CD8-positive, alpha-beta memory T cell (primary cell): ENCODE measurements at regions of chr6 and their contacts with region 1.

Region 1: DNA sequence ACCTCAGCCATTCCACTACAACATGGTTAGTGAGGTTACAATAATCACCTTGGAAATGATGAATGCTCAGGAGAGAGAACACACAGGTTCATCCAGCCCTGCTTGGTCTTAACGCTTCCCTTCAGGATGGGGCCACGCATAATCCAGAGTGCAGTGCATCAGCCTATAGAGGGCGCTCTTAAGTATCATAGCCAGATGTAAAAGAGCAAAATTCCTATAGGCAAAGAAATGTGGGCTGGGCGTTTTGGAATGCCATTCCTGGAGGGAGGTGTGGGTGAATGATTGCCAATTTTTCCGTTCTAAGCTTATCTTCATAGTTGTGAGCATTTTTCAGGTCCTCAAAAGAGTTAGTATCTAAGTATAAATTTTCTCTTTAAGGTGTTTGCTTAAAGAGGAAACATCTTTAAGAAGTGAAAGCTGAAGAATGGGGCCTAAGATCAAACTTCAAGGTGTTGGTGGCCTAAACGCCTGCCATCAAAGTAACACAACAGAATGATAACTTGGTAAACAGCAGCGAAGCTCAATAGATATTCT is 1.8 kb downstream of the RIPOR2 start:
- DNase-seq: peak in 4 of 5 donors; percentile 39 to 75 (median 61)
- H3K4me3 ChIP-seq: peak overlapping the region; percentile 72
- H3K4me3 Mint-ChIP-seq: peak overlapping the region; percentile 85 to 99 (median 99)
- H3K27ac ChIP-seq: peak overlapping the region; percentile 64
- H3K27ac Mint-ChIP-seq: peak overlapping the region; percentile 84 to 97 (median 90)
- H3K4me1 ChIP-seq: peaks cover 45% of the 10 kb centered on the region
- H3K4me1 Mint-ChIP-seq: peaks cover 54 to 65% (median 64%) of the 10 kb centered on the region in 3 donors
- H3K27me3 ChIP-seq: no peaks in the 10 kb centered on the region
- H3K27me3 Mint-ChIP-seq: no peaks in the 10 kb centered on the region

Region 2: DNA sequence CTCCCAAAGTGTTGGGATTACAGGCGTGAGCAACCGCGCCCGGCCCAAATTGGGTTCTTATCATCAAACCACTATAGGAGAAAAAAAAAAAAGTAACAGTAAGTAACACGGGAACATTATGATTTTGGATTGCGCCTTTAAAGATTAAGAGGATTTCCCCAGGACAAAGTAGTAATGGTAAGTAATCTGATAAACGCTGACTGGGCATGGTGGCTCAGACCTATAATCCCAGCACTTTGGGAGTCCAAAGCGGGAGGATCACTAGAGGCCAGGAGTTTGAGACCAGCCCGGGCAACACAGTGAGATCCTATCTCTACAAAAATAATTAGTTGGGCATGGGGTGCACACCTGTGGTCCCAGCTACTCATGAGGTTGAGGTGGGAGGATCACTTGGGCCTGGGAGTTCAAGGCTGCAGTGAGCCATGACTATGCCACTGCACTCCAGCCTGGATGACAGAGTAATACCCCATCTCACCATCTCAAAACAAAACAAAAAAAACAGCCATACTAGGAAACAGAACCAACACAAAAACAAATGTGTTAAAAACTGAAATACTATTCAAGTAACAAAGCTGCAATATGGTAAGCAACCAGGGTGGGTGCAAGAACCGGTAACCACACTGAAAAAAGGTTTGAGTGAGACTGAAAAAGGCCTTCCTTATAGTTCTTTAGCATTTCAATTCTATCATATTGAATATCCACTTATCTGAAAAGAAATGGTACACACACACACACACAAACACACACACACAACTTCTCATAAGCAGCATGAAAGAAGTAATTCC is 223.2 kb before region 1 on chr6:
- CTCF ChIA-PET with region 1: no interaction called
- POLR2A ChIA-PET with region 1: no interaction called
- DNase-seq: no peak
- H3K4me3 ChIP-seq: no peak overlapping the region
- H3K4me3 Mint-ChIP-seq: peak overlapping the region in 6 of 7 donors; percentile 10 to 52 (median 41)
- H3K27ac ChIP-seq: no peak overlapping the region
- H3K27ac Mint-ChIP-seq: peak overlapping the region; percentile 19 to 98 (median 79)
- H3K4me1 ChIP-seq: peaks cover 48% of the 10 kb centered on the region
- H3K4me1 Mint-ChIP-seq: peaks cover 52 to 81% (median 72%) of the 10 kb centered on the region in 3 donors
- H3K27me3 ChIP-seq: no peaks in the 10 kb centered on the region
- H3K27me3 Mint-ChIP-seq: no peaks in the 10 kb centered on the region

Region 3: DNA sequence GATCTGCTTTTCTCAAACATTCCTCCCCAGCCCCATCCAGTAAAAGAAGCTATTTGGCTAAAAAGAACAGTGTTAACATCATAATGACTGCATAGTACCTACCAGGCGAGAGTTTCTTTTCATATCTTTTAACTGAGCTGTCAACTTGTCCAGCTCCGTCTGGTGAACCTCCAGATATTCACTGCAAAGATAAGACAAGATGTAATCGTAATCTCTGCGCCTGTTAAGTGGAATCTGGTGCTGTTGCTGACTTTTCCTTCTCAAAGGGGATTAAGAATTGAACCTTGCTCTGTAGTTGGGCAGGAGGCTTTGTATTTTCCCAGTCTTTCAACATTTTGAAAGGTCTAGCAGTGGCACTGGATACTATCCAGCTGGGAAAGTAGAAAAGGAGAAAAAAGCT is 61.2 kb before region 1 on chr6:
- CTCF ChIA-PET with region 1: interaction called, 12 read pairs
- POLR2A ChIA-PET with region 1: no interaction called
- DNase-seq: no peak
- H3K4me3 ChIP-seq: no peak overlapping the region
- H3K4me3 Mint-ChIP-seq: no peak overlapping the region
- H3K27ac ChIP-seq: no peak overlapping the region
- H3K27ac Mint-ChIP-seq: peak overlapping the region in 7 of 8 donors; percentile 9 to 85 (median 73)
- H3K4me1 ChIP-seq: peaks cover 58% of the 10 kb centered on the region
- H3K4me1 Mint-ChIP-seq: peaks cover 62 to 73% (median 72%) of the 10 kb centered on the region in 3 donors
- H3K27me3 ChIP-seq: no peaks in the 10 kb centered on the region
- H3K27me3 Mint-ChIP-seq: no peaks in the 10 kb centered on the region

Region 4: GRCh38 chr6:24910961-24911712 is 22.8 kb before region 1 on chr6:
- CTCF ChIA-PET with region 1: interaction called, 98 read pairs
- POLR2A ChIA-PET with region 1: interaction called, 46 read pairs
- DNase-seq: peak; percentile 20 to 63 (median 47)
- H3K4me3 ChIP-seq: peak overlapping the region; percentile 61
- H3K4me3 Mint-ChIP-seq: peak overlapping the region; percentile 89 to 98 (median 94)
- H3K27ac ChIP-seq: peak overlapping the region; percentile 51
- H3K27ac Mint-ChIP-seq: peak overlapping the region; percentile 90 to 99 (median 98)
- H3K4me1 ChIP-seq: peaks cover 95% of the 10 kb centered on the region
- H3K4me1 Mint-ChIP-seq: peaks cover 96 to 97% (median 97%) of the 10 kb centered on the region in 3 donors
- H3K27me3 ChIP-seq: no peaks in the 10 kb centered on the region
- H3K27me3 Mint-ChIP-seq: no peaks in the 10 kb centered on the region

Region 5: DNA sequence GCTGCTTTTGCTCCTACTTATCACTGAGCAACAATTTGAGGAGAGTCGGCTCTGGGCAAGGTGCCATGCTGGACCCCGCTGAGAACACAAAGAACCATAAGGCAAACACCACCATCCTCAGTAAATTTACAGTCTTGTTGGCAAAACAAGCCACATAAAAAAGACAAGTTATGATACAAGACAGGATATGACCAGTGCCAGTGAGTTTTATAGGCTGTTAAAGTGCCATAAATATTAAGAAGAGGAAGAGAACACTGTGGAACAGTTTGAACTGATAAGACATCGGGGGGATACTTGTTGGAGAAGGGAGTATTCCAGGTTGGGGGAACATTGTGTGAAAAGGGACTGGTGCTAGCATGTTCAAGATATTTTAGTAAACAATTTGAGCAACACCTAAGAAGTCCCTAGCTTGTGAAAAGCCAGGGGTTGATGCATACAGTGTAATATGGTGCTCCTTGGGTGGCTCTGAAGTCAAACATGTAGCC is 27.1 kb after region 1 on chr6:
- CTCF ChIA-PET with region 1: interaction called, 192 read pairs
- POLR2A ChIA-PET with region 1: interaction called, 4 read pairs
- DNase-seq: peak in 2 of 5 donors; percentile 40 to 70
- H3K4me3 ChIP-seq: peak overlapping the region; percentile 15
- H3K4me3 Mint-ChIP-seq: peak overlapping the region in 6 of 7 donors; percentile 37 to 89 (median 70)
- H3K27ac ChIP-seq: no peak overlapping the region
- H3K27ac Mint-ChIP-seq: peak overlapping the region; percentile 55 to 98 (median 92)
- H3K4me1 ChIP-seq: peaks cover 82% of the 10 kb centered on the region
- H3K4me1 Mint-ChIP-seq: peaks cover 80 to 89% (median 89%) of the 10 kb centered on the region in 3 donors
- H3K27me3 ChIP-seq: no peaks in the 10 kb centered on the region
- H3K27me3 Mint-ChIP-seq: peaks cover 0 to 3% of the 10 kb centered on the region in 2 donors

Region 6: GRCh38 chr6:24980507-24981387 is 46.8 kb after region 1 on chr6:
- CTCF ChIA-PET with region 1: interaction called, 61 read pairs
- POLR2A ChIA-PET with region 1: interaction called, 3 read pairs
- DNase-seq: no peak
- H3K4me3 ChIP-seq: no peak overlapping the region
- H3K4me3 Mint-ChIP-seq: peak overlapping the region in 4 of 7 donors; percentile 20 to 79 (median 30)
- H3K27ac ChIP-seq: no peak overlapping the region
- H3K27ac Mint-ChIP-seq: peak overlapping the region; percentile 45 to 92 (median 71)
- H3K4me1 ChIP-seq: peaks cover 51% of the 10 kb centered on the region
- H3K4me1 Mint-ChIP-seq: peaks cover 53 to 81% (median 80%) of the 10 kb centered on the region in 3 donors
- H3K27me3 ChIP-seq: no peaks in the 10 kb centered on the region
- H3K27me3 Mint-ChIP-seq: no peaks in the 10 kb centered on the region